ENCODE measurements at regions of chr19 and their contacts with region 1.

Region 1: DNA sequence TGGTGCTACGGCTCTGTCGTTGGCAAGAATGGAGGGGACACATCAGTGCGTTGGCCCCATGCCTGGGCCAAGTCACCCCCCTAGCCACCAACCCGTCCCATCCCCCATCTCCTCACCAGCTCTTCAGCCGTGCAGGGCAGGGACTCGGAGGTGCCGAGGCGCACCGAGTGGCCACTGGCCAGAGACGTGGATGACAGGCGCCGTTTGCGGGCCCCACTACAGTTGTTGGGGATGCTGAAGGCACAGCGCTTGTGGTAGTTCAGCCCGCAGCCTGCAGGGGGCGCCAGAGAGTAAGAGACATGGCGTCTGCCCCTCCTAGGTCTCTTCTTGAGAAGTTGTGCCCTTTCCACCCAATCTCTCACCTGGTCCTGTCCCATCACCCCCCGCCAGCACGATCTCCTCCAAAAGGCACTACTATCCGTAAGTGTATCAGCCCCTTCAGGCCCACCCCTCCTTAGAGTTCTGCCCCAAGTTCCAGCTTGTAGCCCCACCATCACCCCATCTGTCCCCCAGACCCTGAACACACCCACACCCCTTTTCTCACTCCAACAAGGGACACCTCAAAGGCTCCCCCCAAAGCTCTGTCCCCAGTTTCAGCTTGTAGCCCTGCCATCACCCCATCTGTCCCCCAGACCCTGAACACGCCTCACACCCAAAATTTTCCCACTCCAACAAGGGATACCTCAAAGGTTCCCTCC is 12.4 kb downstream of the PRKD2 start:
- DNase-seq: peak in 1 of 2 experiments; percentile 100
- H3K4me3 ChIP-seq: no peak overlapping the region
- H3K27ac ChIP-seq: no peak overlapping the region
- H3K4me1 ChIP-seq: peaks cover 0 to 1% (median 0%) of the 10 kb centered on the region in 4 experiments; a peak in 1 of 7 replicates
- H3K27me3 ChIP-seq: no peaks in the 10 kb centered on the region
- CTCF ChIP-seq: peak; percentile 89 to 96 (median 89)
- EP300 ChIP-seq: no peak
- POLR2A ChIP-seq: no peak; a peak in 1 of 3 replicates
- RAD21 ChIP-seq: peak; percentile 63 to 64

Region 2: GRCh38 chr19:46687438-46688145 is 16.9 kb before region 1 on chr19:
- CTCF ChIA-PET with region 1: interaction called, 13 read pairs
- POLR2A ChIA-PET with region 1: no interaction called
- DNase-seq: no peak
- H3K4me3 ChIP-seq: no peak overlapping the region
- H3K27ac ChIP-seq: no peak overlapping the region
- H3K4me1 ChIP-seq: no peaks in the 10 kb centered on the region
- H3K27me3 ChIP-seq: no peaks in the 10 kb centered on the region
- CTCF ChIP-seq: no peak
- EP300 ChIP-seq: no peak
- POLR2A ChIP-seq: no peak
- RAD21 ChIP-seq: no peak

Region 3: GRCh38 chr19:46717034-46717723 is 12.7 kb after region 1 on chr19 and contains the start of gene PRKD2:
- CTCF ChIA-PET with region 1: interaction called, 188 read pairs
- POLR2A ChIA-PET with region 1: interaction called, 7 read pairs
- DNase-seq: peak in 1 of 2 experiments; percentile 100
- H3K4me3 ChIP-seq: peak within 1 kb of the TSS; percentile 76 to 94 (median 81)
- H3K27ac ChIP-seq: peak within 1 kb of the TSS; percentile 78
- H3K4me1 ChIP-seq: peaks cover 0 to 15% (median 6%) of the 10 kb centered on the region in 4 experiments; a peak in 5 of 7 replicates
- H3K27me3 ChIP-seq: no peaks in the 10 kb centered on the region
- CTCF ChIP-seq: no peak
- EP300 ChIP-seq: no peak
- POLR2A ChIP-seq: peak in 1 of 2 experiments; percentile 66; a peak in 2 of 3 replicates
- RAD21 ChIP-seq: no peak
- total RNA-seq, gene PRKD2: 63.8 and 73.1 TPM in 2 replicates

Region 4: DNA sequence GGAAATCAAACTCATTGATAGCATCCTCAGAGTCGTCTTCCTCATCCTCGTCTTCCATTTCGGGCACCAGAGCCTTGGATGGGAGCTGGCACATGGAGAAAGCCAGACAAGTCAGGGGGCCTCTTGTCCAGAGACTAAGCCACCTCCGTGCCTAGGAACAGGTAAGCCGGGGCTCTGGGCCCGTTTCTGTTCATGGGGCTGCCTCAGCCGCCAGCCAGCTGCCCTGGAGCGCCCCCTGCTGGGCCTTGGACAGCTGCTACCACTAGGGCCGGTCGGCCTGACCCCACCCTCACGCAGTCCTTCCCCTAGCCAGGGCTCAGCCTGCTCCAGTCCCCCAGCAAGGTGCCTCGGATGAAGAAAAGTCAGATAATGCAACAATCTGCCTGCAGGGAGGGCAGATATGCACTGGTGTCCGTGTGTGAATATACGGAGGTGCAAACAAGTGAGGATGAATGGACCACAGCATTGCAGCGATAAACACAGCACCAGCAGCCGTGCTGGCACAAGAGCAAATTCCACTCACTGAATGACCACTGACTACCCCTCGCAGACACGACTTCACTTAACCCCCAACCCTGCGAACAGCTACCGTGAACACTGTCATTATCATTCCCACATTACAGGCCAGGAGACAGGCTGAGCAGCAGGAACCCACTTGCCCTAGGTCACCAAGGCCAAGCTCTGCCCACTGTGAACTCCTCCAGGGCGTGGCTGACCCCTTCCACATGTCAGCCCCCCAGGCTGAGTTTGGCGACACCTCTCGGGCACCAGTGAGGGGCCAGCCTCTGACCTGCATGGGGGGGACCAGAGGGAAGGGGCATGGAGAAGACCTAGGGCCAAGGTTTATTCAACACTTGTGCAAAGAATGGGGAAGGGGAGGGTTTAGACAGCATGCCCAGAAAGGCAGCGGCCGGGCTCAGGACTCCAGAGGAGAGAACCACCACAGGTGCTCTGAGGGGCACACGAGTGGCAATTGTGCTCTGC is 24.5 kb after region 1 on chr19:
- CTCF ChIA-PET with region 1: interaction called, 188 read pairs
- POLR2A ChIA-PET with region 1: interaction called, 5 read pairs
- DNase-seq: peak in 1 of 2 experiments; percentile 90
- H3K4me3 ChIP-seq: no peak overlapping the region
- H3K27ac ChIP-seq: no peak overlapping the region
- H3K4me1 ChIP-seq: peaks cover 0 to 3% (median 0%) of the 10 kb centered on the region in 4 experiments; a peak in 4 of 7 replicates
- H3K27me3 ChIP-seq: no peaks in the 10 kb centered on the region
- CTCF ChIP-seq: peak; percentile 81 to 90 (median 89)
- EP300 ChIP-seq: no peak
- POLR2A ChIP-seq: no peak; a peak in 1 of 3 replicates
- RAD21 ChIP-seq: peak; percentile 74 to 81

Region 5: DNA sequence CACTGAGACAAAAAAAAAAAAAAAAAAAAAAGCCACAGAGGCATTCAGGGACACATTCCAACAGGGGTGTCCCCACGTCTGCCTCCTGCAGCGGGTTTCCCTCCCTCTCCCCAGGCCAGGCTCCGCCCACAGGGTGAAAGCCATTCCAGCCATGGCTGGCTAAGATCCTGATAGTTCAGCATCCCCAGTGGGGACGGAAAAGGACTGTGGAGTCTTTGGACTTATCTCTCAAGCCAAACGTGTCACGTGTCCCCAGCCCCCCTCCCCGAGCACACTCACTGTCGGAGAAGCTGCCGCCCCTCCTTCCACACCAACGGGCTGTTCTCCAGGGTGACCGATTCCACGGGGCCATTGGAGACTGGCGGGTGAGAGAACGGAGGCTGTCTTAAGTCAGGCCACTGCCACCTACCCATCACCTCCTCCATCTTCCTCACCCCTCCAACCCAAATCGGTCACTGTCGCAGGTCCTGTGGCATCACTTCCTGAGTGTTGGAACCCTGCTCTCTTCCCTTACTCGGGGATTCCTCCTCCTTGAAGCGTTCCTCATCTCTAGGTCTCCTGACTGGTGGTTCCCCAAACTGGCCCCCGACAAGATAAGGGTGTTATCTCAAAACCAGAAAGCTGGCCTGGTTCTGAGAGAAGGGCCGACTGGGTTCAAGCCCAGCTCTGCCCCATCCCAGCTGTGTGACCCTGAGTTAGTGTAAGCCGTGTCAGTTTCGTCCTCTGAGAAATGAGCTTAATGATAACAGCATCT is 32.2 kb after region 1 on chr19:
- CTCF ChIA-PET with region 1: interaction called, 188 read pairs
- POLR2A ChIA-PET with region 1: no interaction called
- DNase-seq: no peak
- H3K4me3 ChIP-seq: no peak overlapping the region
- H3K27ac ChIP-seq: no peak overlapping the region
- H3K4me1 ChIP-seq: peaks cover 0 to 6% (median 2%) of the 10 kb centered on the region in 4 experiments; a peak in 3 of 7 replicates
- H3K27me3 ChIP-seq: no peaks in the 10 kb centered on the region
- CTCF ChIP-seq: no peak
- EP300 ChIP-seq: no peak
- POLR2A ChIP-seq: no peak
- RAD21 ChIP-seq: no peak

Region 6: DNA sequence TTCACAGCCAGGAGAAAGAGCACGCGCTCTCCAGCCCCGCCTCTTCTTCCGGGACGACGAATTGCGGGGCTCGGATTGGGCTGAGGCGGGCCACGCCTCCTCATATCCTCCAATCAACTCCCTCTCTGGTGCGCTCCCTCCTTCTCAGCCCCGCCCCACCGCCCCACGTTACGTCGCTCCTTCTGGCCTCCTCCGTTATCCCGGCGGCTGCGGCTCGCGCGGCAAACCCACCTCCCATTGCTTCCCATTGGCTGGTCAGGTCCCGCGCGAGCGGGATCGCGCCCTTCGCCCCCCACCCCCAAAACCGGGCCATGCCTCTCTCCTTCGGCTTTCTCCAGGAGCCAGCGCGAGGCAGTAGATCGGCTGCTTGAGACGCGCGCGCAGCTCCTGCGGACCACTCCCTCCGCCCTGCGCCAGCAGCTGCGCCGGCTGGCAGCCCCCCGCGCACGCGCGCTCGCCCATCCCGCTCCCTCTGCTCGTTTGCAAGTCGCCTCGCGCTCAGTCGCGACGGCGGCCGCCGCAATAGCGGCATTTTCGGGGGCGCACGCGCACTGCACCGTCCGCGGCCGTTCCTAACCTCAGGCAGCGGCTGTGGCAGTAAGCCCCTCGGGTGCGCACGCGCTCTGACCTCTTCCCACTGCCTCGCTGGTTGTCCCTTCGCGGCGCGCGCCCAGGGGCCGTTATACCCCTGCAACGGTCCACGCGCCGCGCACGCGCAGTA is 155.8 kb after region 1 on chr19:
- CTCF ChIA-PET with region 1: no interaction called
- POLR2A ChIA-PET with region 1: no interaction called
- DNase-seq: peak; percentile 95
- H3K4me3 ChIP-seq: peak overlapping the region; percentile 74 to 88 (median 84)
- H3K27ac ChIP-seq: peak overlapping the region; percentile 95
- H3K4me1 ChIP-seq: peaks cover 4 to 16% (median 8%) of the 10 kb centered on the region in 4 experiments
- H3K27me3 ChIP-seq: peaks cover 0 to 1% (median under 1%) of the 10 kb centered on the region in 4 experiments; a peak in 1 of 7 replicates
- CTCF ChIP-seq: no peak
- EP300 ChIP-seq: no peak
- POLR2A ChIP-seq: peak; percentile 74 to 81
- RAD21 ChIP-seq: no peak

Measured in H1 (cell line).